RWPE1 (cell line): ENCODE measurements at regions of chr20 and their contacts with region 1.

Region 1: GRCh38 chr20:21465799-21466198 is 48.1 kb downstream of the NKX2-2 start:
- DNase-seq: no peak
- H3K27ac ChIP-seq: no peak overlapping the region
- CTCF ChIP-seq: no peak

Region 2: DNA sequence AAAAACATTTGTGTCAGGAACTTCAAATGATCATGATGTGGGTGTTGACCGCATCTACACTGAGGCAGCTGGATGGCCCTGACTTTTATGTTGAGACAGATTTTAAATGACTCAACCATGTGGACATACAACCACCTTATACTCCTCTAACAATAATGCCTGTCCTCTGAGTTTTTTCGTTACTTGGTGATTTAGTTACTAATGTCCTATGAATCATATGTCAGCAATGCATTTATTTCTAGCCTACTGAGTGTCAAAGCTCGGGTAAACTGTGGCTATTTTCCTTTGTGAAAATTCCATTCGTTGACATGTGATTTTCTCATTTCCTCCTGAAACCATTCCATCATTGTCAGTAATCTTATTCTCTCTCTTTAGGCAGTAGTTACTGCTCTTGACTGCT is 29.6 kb before region 1 on chr20:
- CTCF ChIA-PET with region 1: interaction called, 10 read pairs
- POLR2A ChIA-PET with region 1: no interaction called
- DNase-seq: peak; percentile 91
- H3K27ac ChIP-seq: no peak overlapping the region
- CTCF ChIP-seq: no peak

Region 3: DNA sequence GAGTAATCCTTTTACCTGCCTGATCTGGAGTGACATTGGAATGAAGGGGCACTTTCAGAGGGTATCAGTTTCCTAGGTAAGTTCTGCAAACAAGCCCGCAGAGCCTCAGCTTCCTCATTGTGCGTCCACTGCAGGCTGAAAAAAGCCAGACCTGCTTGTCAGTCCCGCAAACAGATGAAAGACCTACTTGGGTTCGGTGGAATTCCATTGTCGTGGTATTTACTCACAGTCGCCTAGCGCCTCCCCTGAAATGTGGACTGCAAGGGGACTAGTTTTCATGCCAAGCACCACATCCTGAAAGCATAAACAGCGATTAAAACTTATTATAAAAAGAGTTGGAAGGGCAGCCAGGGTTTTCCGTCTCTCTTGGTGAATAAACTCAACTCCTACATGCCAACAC is 361.2 kb after region 1 on chr20:
- CTCF ChIA-PET with region 1: no interaction called
- POLR2A ChIA-PET with region 1: no interaction called
- DNase-seq: no peak
- H3K27ac ChIP-seq: no peak overlapping the region
- CTCF ChIP-seq: no peak